Psoas muscle (tissue), 8 donors: ENCODE measurements at regions of chr6 and their contacts with region 1.

Region 1: DNA sequence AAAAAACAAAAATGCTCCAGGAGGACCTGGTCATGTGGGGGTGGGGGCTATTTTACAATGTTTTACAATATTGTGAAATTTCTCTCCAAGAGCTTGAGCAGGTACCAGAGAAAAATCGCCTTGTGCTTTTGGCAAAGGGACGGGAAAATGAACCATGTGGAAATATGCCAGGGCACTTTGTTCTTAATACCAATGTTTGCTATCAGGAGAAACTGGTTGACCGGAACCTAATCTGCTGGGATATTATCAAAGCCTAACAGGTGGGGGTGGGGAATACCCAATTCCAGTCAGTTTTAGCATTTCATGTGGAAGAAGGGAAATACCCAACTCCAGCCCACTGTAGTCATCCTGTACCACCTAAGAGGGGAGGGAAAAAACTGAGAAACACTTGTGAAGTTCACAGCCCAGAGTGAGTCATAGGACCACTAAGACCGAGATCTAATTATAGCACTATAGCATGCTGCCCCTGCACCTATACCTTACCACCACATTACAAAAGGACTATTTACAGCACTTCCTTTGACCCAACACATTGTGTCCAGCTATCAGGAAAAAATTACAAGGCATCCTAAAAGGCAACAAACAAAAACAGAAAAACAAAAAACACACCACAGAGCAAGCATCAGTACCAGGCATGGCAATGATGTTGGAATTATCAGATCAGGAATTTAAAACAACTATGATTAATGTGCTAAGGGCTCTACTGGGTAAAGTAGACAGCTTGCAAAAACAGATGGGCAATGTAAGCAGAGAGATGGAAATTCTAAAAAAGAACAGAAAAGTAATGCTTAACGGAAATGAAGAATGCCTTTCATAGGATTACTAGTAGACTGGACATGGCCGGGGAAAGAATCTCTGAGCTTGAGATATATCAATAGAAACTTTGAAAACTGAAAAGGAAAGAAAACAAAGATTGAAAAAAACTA is 84.1 kb upstream of the POPDC3 start:
- DNase-seq: no peak
- ATAC-seq: peak in 1 of 4 donors; percentile 52
- H3K4me3 ChIP-seq: no peak overlapping the region
- H3K27ac ChIP-seq: no peak overlapping the region
- H3K4me1 ChIP-seq: peaks cover 3% of the 10 kb centered on the region
- H3K27me3 ChIP-seq: no peaks in the 10 kb centered on the region
- CTCF ChIP-seq: no peak

Region 2: DNA sequence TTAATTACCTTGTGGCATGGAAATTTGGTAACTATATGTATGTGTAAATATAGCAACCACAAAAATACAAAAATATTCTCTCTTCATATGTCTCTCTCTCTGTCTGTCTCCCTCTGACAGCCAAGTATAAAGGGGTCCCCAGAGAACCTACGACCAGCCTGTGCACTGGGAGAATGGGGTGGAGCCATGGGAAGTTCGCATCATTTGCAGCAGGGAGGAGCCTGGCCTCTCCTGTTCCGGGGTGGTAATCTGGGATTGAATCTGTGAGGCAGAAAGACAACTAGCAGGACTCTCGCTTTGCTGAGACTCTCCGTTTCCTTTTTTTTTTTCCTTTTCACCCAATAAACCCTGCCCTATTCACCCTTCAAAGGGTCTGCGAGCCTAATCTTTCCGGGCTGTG is 1513.3 kb before region 1 on chr6:
- intact Hi-C with region 1: no loop called
- DNase-seq: no peak
- ATAC-seq: no peak
- H3K4me3 ChIP-seq: no peak overlapping the region
- H3K27ac ChIP-seq: no peak overlapping the region
- H3K4me1 ChIP-seq: no peaks in the 10 kb centered on the region
- H3K27me3 ChIP-seq: no peaks in the 10 kb centered on the region
- CTCF ChIP-seq: no peak

Region 3: DNA sequence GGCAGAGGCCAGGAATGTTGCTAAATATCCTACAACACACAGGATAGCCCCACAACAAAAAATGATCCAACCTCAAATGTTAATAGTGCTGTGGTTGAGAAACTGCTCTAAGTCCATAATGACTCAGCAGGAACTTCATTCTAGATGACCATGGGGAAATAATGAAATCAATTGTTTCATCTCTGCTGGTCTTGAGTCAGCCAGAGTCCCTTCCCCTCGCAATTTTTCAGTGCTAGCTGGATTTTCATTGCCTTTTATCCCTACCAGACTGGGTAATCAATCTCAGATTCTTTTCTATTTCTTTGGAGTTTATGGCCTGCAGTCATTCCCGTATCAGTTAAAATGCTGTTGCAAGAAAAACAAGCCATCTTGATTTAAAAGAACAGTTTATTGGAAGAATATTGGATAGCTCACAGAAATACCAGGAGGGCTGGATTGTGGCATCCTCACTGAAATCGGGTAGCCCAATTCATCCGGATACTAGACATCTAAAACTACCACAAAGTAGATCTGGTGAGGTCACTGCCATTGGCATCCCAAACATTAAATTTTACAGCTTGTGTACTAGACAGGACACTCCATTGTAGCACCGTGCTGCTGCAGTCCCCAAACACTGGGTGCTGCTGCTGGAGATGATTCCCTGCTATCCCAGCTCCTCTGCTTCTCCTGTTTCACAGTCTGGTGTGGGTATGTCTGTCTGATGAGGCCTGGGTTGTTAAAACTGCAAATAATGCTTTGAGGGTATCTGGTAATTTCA is 53.8 kb before region 1 on chr6:
- intact Hi-C with region 1: loop called in 1 of 2 experiments (anchors 10 kb)
- DNase-seq: no peak
- ATAC-seq: peak; percentile 42 to 57 (median 55)
- H3K4me3 ChIP-seq: no peak overlapping the region
- H3K27ac ChIP-seq: peak overlapping the region; percentile 19
- H3K4me1 ChIP-seq: peaks cover 18% of the 10 kb centered on the region
- H3K27me3 ChIP-seq: no peaks in the 10 kb centered on the region
- CTCF ChIP-seq: no peak

Region 4: DNA sequence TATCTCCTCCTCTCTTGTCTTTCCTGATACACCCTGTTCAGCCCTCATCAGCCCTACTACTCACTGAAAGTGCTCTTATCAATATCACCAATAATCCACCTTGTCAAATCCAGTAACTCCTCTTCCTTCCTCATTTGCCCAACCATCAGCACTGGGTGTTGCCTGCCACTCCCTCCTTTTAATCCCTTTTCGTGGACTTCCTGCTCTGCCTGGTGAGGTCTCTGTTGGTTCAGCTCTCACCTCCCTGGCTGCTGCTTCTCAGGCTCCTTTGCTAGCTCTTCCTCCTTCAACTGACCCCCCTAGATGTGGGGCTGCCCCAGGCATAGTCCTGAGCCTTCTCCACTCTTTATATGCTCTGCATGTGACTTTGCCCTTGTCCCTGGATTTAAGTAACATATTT is 46.4 kb after region 1 on chr6:
- intact Hi-C with region 1: no loop called
- DNase-seq: no peak
- ATAC-seq: no peak
- H3K4me3 ChIP-seq: no peak overlapping the region
- H3K27ac ChIP-seq: no peak overlapping the region
- H3K4me1 ChIP-seq: no peaks in the 10 kb centered on the region
- H3K27me3 ChIP-seq: no peaks in the 10 kb centered on the region
- CTCF ChIP-seq: no peak